Common myeloid progenitor, CD34-positive (primary cell): ENCODE measurements at regions of chr7 and their contacts with region 1.

Region 1: GRCh38 chr7:47088329-47089067 is 493.4 kb downstream of the TNS3 start:
- DNase-seq: peak; percentile 35 to 61 (median 50)
- H3K4me3 ChIP-seq: no peak overlapping the region
- H3K27ac ChIP-seq: no peak overlapping the region
- H3K4me1 ChIP-seq: peaks cover 0 to 2% (median 0%) of the 10 kb centered on the region in 4 experiments
- H3K27me3 ChIP-seq: no peaks in the 10 kb centered on the region

Region 2: DNA sequence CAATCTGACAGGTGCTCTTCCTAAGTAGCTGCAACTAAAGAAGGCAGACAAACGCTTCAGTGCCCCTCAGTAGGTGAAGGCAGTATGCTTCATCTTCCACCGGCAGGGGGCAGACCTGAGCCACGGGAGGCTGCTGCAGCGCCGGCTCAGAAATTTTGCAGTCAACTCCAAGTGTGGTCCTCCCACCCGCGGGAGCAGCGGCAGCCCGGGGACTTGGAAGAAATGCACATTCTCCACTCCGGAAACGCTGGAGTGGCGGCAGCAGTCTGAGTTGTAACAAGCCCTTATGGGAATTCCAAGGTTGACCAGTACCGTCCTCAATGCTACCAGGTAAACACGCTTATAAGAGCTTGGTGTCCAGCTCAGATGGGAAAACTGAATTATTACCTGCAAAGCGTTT is 1170.8 kb before region 1 on chr7:
- CTCF ChIA-PET with region 1: interaction called, 13 read pairs
- POLR2A ChIA-PET with region 1: no interaction called
- DNase-seq: peak; percentile 50 to 78 (median 68)
- H3K4me3 ChIP-seq: no peak overlapping the region
- H3K27ac ChIP-seq: no peak overlapping the region
- H3K4me1 ChIP-seq: peaks cover 0 to 22% (median 16%) of the 10 kb centered on the region in 4 experiments
- H3K27me3 ChIP-seq: peaks cover 18 to 75% (median 35%) of the 10 kb centered on the region in 5 experiments

Region 3: GRCh38 chr7:45923290-45923689 is 1165.2 kb before region 1 on chr7:
- CTCF ChIA-PET with region 1: interaction called, 13 read pairs
- POLR2A ChIA-PET with region 1: no interaction called
- DNase-seq: peak; percentile 59 to 79 (median 74)
- H3K4me3 ChIP-seq: peak overlapping the region in 1 of 7 experiments; percentile 45
- H3K27ac ChIP-seq: no peak overlapping the region
- H3K4me1 ChIP-seq: peaks cover 0 to 26% (median 17%) of the 10 kb centered on the region in 4 experiments
- H3K27me3 ChIP-seq: peaks cover 16 to 81% (median 48%) of the 10 kb centered on the region in 5 experiments

Region 4: DNA sequence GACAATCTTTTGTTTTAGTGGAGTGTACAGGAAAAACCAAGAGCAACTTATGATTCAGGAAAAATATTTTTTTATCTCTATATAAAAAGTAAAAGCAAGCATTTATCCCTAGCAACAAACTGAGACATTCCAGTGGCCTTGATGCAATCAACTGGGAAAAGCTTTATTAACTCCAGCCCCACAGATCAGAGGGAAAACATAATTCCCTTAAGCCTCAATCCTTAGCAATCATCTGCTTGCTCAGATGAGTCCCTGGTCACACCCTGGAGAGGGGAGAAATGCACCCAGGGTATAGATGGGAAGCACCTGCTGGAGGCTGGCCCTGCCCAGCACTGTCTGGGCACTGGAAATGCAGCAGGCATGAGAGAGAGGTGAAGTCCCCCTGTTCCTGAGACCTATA is 143.2 kb before region 1 on chr7:
- CTCF ChIA-PET with region 1: no interaction called
- POLR2A ChIA-PET with region 1: no interaction called
- DNase-seq: no peak
- H3K4me3 ChIP-seq: no peak overlapping the region
- H3K27ac ChIP-seq: no peak overlapping the region
- H3K4me1 ChIP-seq: no peaks in the 10 kb centered on the region
- H3K27me3 ChIP-seq: no peaks in the 10 kb centered on the region

Region 5: DNA sequence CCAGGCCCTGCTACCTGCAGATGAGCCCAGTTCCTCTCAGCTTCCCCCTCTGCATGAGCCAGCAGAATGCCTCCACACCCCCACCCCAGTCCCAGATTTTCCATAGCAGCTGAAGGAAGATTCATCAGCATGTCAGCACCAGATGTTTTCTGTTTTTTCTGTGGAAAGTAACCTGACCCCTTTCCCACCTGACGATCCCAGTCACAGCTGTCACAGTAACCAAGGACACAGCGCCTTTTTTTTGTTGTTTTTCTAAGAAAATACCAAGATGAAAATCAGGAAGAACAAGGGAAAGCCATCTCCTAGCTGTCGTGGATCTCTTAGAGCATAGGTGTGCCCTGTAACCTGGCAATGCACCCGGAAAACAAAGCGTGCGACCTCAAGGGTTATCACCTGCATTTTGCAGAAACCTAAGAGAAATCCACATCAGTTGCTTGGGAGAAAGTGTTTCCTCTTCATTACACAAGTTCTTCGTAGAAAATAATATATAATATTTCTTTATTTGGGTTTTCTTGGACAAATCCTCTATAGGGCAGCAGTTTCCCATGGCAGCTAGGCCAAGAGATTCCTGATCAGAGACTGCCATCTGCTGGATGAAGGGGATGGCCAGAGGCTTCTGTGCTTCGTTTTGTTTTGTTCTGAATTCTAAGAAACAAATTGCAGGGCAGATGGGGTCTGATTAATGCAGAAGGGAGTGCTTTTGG is 91.5 kb after region 1 on chr7:
- CTCF ChIA-PET with region 1: interaction called, 11 read pairs
- POLR2A ChIA-PET with region 1: no interaction called
- DNase-seq: peak; percentile 42 to 70 (median 56)
- H3K4me3 ChIP-seq: no peak overlapping the region
- H3K27ac ChIP-seq: no peak overlapping the region
- H3K4me1 ChIP-seq: peaks cover 0 to 3% (median 0%) of the 10 kb centered on the region in 4 experiments
- H3K27me3 ChIP-seq: peaks cover 0 to 9% (median 0%) of the 10 kb centered on the region in 5 experiments